AG04450 (cell line): ENCODE measurements at regions of chr3 and their contacts with region 1.

Region 1: DNA sequence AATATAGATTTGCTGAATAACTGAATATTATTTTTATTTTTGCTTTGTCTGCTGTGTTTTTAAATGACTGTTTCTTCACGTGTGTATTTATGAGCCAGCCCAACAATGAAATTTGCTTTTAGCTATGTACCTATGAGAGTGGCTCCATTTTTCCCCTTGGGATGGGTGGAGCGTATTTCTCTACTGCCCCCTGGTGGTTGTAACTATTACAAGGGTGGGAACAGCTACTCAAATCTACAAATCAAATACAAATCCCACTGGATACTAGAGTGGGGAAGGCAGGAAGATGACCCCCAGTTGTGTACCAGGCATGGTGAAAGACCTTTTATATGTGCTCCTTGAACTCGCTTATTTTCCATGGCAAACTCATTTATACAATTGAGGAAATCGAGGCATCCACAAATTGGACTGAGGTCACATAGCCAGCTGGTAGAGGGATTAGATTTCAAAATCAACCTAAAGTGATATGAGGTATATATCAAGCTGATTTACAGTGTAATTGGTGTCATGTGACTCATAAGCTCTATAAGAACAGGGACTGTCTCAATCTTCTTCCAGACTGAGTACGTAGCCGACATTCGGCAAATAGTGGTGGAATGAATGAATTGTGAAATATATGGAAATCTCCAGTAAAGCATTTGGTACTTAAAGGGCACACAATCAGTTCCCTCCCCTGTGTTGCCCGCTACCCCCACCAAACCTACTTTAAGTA is 69.5 kb upstream of the VEPH1 start:
- DNase-seq: no peak
- H3K4me3 ChIP-seq: no peak overlapping the region
- H3K27ac ChIP-seq: no peak overlapping the region
- H3K27me3 ChIP-seq: no peaks in the 10 kb centered on the region
- CTCF ChIP-seq: peak; percentile 82

Region 2: DNA sequence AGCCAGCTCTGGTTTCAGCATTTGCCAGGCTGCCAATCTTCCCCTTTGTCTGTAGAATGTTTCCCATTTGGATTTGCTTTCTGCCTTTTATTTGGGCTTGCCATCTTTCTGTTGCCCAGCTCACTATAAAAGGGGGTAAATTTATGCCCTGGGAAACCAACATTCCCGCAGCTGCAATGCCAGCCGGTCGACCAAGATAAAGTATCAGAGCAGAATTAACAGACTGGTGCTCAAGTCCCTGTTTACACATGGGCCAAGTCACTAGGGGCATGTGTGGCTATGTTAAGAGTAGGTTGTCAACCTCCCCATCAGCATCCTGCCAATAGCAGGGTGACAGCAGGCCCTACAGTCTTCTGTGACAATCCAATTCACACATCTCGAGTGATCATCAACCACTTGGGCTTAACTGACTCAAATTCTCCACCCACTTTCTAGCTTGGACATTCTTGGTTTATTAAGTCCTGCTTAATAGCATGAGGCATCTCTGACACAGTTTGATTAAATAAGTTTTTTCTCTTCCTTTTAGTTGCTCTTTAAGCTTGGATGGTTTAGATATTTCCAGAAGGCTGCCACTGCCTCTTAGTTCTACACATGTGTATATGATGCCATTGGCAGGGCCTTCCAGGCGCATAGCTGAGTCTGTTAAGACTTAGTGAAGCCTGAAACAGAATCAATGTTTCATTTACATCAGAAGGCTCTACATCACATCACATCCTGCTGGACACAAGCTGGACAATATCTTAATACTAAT is 45.4 kb before region 1 on chr3:
- CTCF ChIA-PET with region 1: interaction called, 241 read pairs
- POLR2A ChIA-PET with region 1: interaction called, 3 read pairs
- DNase-seq: no peak
- H3K4me3 ChIP-seq: no peak overlapping the region
- H3K27ac ChIP-seq: no peak overlapping the region
- H3K27me3 ChIP-seq: no peaks in the 10 kb centered on the region
- CTCF ChIP-seq: no peak

Region 3: DNA sequence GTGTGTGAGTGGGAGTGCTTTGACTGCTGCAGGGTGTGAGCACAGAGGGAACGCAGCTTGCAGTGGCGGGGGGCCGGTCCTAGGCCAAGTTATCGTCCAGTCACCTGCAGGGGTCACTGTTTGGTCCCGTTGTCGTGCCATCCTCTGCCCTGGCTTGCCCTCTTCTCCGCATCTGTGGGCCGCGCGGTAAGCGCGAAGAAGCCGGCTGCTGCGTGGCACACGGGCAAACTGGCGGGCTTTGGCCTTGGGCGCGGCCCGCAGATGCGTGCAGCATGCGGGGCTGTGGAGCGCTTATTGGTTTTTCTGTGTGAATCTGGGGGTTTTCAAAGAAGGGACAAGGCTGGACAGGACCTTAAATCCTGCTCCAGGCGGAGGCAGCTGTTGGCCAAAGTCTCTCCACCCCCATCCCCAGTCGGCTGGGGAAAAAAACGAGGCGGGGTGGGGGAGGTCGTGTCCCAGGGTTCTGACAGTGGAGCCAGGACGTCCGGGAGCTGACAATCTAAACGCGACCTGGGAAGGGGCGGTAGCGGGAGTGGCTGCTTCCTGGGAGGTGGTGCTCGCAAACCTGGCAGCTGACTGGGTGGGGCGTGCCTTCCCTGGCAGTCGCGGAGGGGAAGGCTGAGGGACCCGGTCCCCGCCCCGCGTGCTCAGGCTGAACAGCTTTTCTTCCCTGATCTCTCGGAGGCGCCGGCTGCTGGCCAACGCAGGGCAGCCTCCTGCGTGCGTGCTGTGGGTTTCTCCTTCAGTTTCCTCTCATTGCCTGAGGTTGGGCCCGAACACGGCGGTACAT is 29.8 kb before region 1 on chr3:
- CTCF ChIA-PET with region 1: interaction called, 241 read pairs
- POLR2A ChIA-PET with region 1: no interaction called
- DNase-seq: peak; percentile 36
- H3K4me3 ChIP-seq: peak overlapping the region; percentile 60
- H3K27ac ChIP-seq: peak overlapping the region; percentile 21
- H3K27me3 ChIP-seq: no peaks in the 10 kb centered on the region
- CTCF ChIP-seq: peak; percentile 38

Region 4: DNA sequence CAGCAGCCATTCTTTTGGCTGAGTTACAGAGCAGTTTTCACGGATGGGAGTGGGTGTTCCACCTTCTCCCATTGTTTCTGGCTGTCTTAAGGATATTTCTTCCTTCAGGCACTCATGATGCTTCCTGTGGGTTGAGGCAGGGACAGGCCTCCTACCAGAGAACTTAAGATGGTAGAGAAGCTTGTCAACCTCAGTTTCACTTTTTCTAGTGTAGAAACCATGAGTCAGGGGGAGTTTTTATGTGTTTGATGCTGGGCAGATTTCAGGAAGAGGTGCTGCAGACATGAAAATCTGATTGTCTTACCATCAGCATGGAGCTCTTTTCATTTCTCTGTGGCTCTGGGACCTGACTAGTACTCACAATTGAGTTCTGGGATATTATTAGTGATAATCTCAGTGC is 20.8 kb before region 1 on chr3:
- CTCF ChIA-PET with region 1: interaction called, 14 read pairs
- POLR2A ChIA-PET with region 1: no interaction called
- DNase-seq: no peak
- H3K4me3 ChIP-seq: no peak overlapping the region
- H3K27ac ChIP-seq: no peak overlapping the region
- H3K27me3 ChIP-seq: no peaks in the 10 kb centered on the region
- CTCF ChIP-seq: no peak

Region 5: GRCh38 chr3:157559401-157559800 is 13.3 kb before region 1 on chr3:
- CTCF ChIA-PET with region 1: interaction called, 13 read pairs
- POLR2A ChIA-PET with region 1: no interaction called
- DNase-seq: no peak
- H3K4me3 ChIP-seq: no peak overlapping the region
- H3K27ac ChIP-seq: no peak overlapping the region
- H3K27me3 ChIP-seq: no peaks in the 10 kb centered on the region
- CTCF ChIP-seq: no peak

Region 6: GRCh38 chr3:157958457-157958856 is 385.7 kb after region 1 on chr3:
- CTCF ChIA-PET with region 1: no interaction called
- POLR2A ChIA-PET with region 1: no interaction called
- DNase-seq: no peak
- H3K4me3 ChIP-seq: no peak overlapping the region
- H3K27ac ChIP-seq: no peak overlapping the region
- H3K27me3 ChIP-seq: no peaks in the 10 kb centered on the region
- CTCF ChIP-seq: no peak